Tibial artery (tissue), 4 donors: ENCODE measurements at regions of chr2 and their contacts with region 1.

Region 1: DNA sequence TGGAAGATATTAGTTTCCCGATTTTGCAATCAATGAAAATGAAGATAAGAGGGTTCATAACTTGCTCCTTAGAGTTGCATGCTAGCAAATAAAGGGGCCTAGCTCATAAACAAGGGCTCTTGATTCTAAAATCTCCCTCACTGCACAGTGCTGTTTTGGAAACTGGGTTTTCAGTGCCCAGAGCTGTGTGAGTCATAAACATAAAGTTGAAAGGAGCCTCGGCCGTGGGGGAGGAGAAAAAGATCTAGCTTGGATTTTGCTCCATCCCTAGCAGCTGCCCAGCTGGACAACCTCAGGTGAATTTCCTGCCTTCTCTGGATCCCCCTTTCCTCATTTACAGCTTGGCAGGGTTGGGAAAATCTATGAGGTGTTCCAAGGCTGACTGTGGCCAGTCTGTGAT is 42.5 kb downstream of the LYPD1 start:
- DNase-seq: no peak
- H3K4me3 ChIP-seq: no peak overlapping the region
- H3K27ac ChIP-seq: no peak overlapping the region
- H3K4me1 ChIP-seq: no peaks in the 10 kb centered on the region
- H3K27me3 ChIP-seq: no peaks in the 10 kb centered on the region
- CTCF ChIP-seq: no peak

Region 2: DNA sequence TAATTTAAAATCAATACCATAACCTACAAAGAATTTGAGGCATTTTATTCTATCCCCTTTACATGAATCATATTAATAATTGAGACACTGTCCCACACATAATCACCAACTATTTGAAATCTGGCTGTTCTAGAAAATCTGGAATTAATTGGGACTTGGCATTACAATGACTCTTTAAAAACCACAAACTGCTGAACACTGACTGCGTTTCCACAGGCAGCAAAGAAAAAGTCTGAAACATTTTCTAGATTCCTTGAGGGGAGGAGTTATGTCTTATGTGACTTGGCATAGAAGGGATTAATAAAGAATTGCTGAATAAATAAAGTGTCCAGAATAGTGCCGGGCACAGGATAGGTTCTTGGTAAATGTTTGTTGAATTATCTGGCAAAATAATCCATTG is 149.6 kb before region 1 on chr2:
- intact Hi-C with region 1: no loop called
- DNase-seq: no peak
- H3K4me3 ChIP-seq: no peak overlapping the region
- H3K27ac ChIP-seq: no peak overlapping the region
- H3K4me1 ChIP-seq: no peaks in the 10 kb centered on the region
- H3K27me3 ChIP-seq: no peaks in the 10 kb centered on the region
- CTCF ChIP-seq: no peak

Region 3: GRCh38 chr2:132562245-132562644 is 65.3 kb before region 1 on chr2:
- intact Hi-C with region 1: no loop called
- DNase-seq: no peak
- H3K4me3 ChIP-seq: no peak overlapping the region
- H3K27ac ChIP-seq: no peak overlapping the region
- H3K4me1 ChIP-seq: no peaks in the 10 kb centered on the region
- H3K27me3 ChIP-seq: no peaks in the 10 kb centered on the region
- CTCF ChIP-seq: no peak

Region 4: GRCh38 chr2:134146620-134147019 is 1519.1 kb after region 1 on chr2:
- intact Hi-C with region 1: loop called (anchors 5 kb)
- DNase-seq: no peak
- H3K4me3 ChIP-seq: no peak overlapping the region
- H3K27ac ChIP-seq: no peak overlapping the region
- H3K4me1 ChIP-seq: peaks cover 0 to 19% (median 2%) of the 10 kb centered on the region in 4 donors
- H3K27me3 ChIP-seq: no peaks in the 10 kb centered on the region
- CTCF ChIP-seq: no peak